B cell (primary cell): ENCODE measurements at regions of chr17 and their contacts with region 1.

Region 1: GRCh38 chr17:27353461-27354050 is 59.6 kb downstream of the WSB1 start:
- DNase-seq: peak; percentile 90
- ATAC-seq: peak; percentile 82
- H3K4me3 ChIP-seq: peak overlapping the region in 4 of 5 experiments; percentile 62 to 78 (median 72)
- H3K4me3 Mint-ChIP-seq: peak overlapping the region; percentile 73
- H3K27ac ChIP-seq: peak overlapping the region; percentile 60 to 89
- H3K27ac Mint-ChIP-seq: peak overlapping the region; percentile 91
- H3K4me1 ChIP-seq: peaks cover 13 to 19% of the 10 kb centered on the region in 2 donors
- H3K4me1 Mint-ChIP-seq: peaks cover 19% of the 10 kb centered on the region
- H3K27me3 ChIP-seq: no peaks in the 10 kb centered on the region
- H3K27me3 Mint-ChIP-seq: no peaks in the 10 kb centered on the region
- CTCF ChIP-seq: peak; percentile 90

Region 2: GRCh38 chr17:27245230-27245696 is 108.3 kb before region 1 on chr17:
- CTCF ChIA-PET with region 1: interaction called, 22 read pairs
- POLR2A ChIA-PET with region 1: no interaction called
- intact Hi-C with region 1: no loop called
- DNase-seq: peak; percentile 79
- ATAC-seq: peak; percentile 97
- H3K4me3 ChIP-seq: no peak overlapping the region
- H3K4me3 Mint-ChIP-seq: peak overlapping the region; percentile 33
- H3K27ac ChIP-seq: no peak overlapping the region
- H3K27ac Mint-ChIP-seq: peak overlapping the region; percentile 53
- H3K4me1 ChIP-seq: peaks cover 9 to 21% of the 10 kb centered on the region in 2 donors
- H3K4me1 Mint-ChIP-seq: peaks cover 27% of the 10 kb centered on the region
- H3K27me3 ChIP-seq: no peaks in the 10 kb centered on the region
- H3K27me3 Mint-ChIP-seq: no peaks in the 10 kb centered on the region
- CTCF ChIP-seq: peak; percentile 74

Region 3: GRCh38 chr17:27332485-27333409 is 20.8 kb before region 1 on chr17:
- CTCF ChIA-PET with region 1: interaction called, 15 read pairs
- POLR2A ChIA-PET with region 1: no interaction called
- intact Hi-C with region 1: loop called (anchors 1 kb)
- DNase-seq: peak; percentile 92
- ATAC-seq: peak; percentile 83
- H3K4me3 ChIP-seq: peak overlapping the region; percentile 23 to 63 (median 55)
- H3K4me3 Mint-ChIP-seq: peak overlapping the region; percentile 85
- H3K27ac ChIP-seq: peak overlapping the region; percentile 38 to 59
- H3K27ac Mint-ChIP-seq: peak overlapping the region; percentile 92
- H3K4me1 ChIP-seq: peaks cover 11 to 13% of the 10 kb centered on the region in 2 donors
- H3K4me1 Mint-ChIP-seq: peaks cover 40% of the 10 kb centered on the region
- H3K27me3 ChIP-seq: no peaks in the 10 kb centered on the region
- H3K27me3 Mint-ChIP-seq: no peaks in the 10 kb centered on the region
- CTCF ChIP-seq: peak; percentile 80

Region 4: DNA sequence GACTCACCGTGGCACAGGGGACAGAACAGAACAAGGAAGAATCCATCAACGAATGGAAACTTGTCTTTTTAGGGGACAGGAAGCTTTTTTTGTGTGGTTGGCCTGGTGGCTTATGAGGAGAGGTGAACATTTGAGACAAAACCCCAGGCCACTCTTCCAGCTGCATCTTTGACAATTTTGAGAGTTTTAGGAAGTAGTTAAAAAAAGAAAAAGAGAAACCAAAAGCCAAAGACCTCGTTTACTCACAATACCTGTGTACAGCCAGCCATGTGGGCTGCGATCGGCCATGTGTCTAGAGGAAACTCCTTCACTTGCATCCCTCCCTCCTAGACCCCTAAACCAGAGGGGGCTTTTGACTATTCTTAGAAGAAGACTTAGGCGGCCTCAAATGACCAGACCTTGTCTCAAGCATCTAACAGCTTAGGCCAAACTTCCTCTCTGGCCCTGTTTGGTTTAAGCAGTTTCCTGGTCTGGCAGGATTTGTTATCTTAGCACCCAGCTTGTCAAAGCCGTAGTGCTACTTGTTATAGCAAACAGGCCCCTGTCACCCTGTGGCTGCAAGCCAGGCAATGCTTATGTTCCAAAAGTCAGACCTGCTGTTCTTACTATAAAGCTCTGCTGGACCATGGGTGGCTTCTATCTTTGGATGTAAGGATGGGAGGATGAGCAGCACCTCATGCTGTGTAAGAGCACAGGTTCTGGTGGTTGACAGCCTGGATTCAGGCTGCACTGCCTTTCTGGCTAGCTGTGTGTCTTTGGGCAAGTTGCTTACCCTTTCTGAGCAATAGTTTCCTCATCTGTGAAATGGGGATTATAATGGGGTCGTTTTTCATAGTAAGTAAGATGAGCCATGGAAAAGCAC is 120.4 kb after region 1 on chr17:
- CTCF ChIA-PET with region 1: interaction called, 4 read pairs
- POLR2A ChIA-PET with region 1: no interaction called
- intact Hi-C with region 1: loop called (anchors 5 kb)
- DNase-seq: peak; percentile 71
- ATAC-seq: no peak
- H3K4me3 ChIP-seq: peak overlapping the region in 4 of 5 experiments; percentile 13 to 38 (median 20)
- H3K4me3 Mint-ChIP-seq: peak overlapping the region; percentile 81
- H3K27ac ChIP-seq: peak overlapping the region; percentile 80 to 89
- H3K27ac Mint-ChIP-seq: peak overlapping the region; percentile 92
- H3K4me1 ChIP-seq: peaks cover 35 to 63% of the 10 kb centered on the region in 2 donors
- H3K4me1 Mint-ChIP-seq: peaks cover 69% of the 10 kb centered on the region
- H3K27me3 ChIP-seq: no peaks in the 10 kb centered on the region
- H3K27me3 Mint-ChIP-seq: no peaks in the 10 kb centered on the region
- CTCF ChIP-seq: no peak

Region 5: DNA sequence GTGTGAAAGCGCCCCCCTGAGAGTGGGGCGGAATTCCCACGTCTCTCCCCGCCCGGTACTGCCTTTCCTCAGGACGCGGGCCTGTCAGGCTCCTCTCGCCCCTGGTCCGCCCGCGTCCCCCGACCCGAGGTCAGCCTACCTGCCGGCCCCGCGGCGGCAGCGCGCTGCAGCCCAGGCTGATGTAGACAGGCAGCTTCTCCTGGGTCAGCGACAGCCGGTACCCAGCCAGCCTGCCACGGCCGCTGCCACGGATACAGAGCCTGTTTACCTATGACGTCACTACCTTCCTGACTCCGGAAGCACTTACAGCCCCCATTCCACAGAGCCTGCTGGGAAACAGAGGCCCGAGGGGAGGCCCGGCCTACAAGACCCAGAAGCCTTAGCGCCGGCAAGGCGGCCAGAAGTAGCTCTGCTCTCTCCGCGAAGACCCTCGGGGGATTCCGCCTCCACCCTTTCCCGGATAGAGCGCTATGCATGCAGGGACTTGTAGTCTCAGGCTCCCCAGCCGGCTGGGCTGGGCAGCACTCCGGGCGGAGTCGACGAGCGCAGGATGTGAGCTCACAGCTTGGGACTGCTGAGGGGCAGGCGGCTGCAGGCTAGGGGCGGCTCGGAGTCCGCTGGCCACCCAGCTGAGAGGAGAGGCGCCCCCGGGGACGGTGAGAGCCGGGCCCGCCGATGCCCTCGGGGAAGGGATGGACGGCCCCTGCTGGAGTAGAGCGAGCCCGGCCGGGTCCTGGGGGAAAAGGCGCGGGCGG is 981.8 kb after region 1 on chr17 and contains the starts of genes IFT20 and TNFAIP1:
- CTCF ChIA-PET with region 1: no interaction called
- POLR2A ChIA-PET with region 1: no interaction called
- intact Hi-C with region 1: loop called (anchors 5 kb)
- DNase-seq: peak; percentile 99
- ATAC-seq: peak; percentile 96
- H3K4me3 ChIP-seq: peak within 1 kb of the TSS; percentile 72 to 89 (median 82)
- H3K4me3 Mint-ChIP-seq: peak within 1 kb of the TSS; percentile 93
- H3K27ac ChIP-seq: peak within 1 kb of the TSS; percentile 82 to 95
- H3K27ac Mint-ChIP-seq: peak within 1 kb of the TSS; percentile 91
- H3K4me1 ChIP-seq: peaks cover 19 to 24% of the 10 kb centered on the region in 2 donors
- H3K4me1 Mint-ChIP-seq: peaks cover 35% of the 10 kb centered on the region
- H3K27me3 ChIP-seq: no peaks in the 10 kb centered on the region
- H3K27me3 Mint-ChIP-seq: no peaks in the 10 kb centered on the region
- CTCF ChIP-seq: no peak
- total RNA-seq, gene IFT20: 33.5 and 35.9 TPM in 2 replicates
- total RNA-seq, gene TNFAIP1: 19.0 and 20.4 TPM in 2 replicates